PC-3 (cell line): ENCODE measurements at regions of chr12 and their contacts with region 1.

Region 1: GRCh38 chr12:130775953-130776856 is 60.1 kb upstream of the RIMBP2 start:
- DNase-seq: peak; percentile 88
- ATAC-seq: peak; percentile 93
- H3K4me3 ChIP-seq: peak overlapping the region; percentile 59
- H3K27ac ChIP-seq: no peak overlapping the region
- H3K4me1 ChIP-seq: peaks cover 16% of the 10 kb centered on the region
- H3K27me3 ChIP-seq: peaks cover 16% of the 10 kb centered on the region
- CTCF ChIP-seq: no peak

Region 2: GRCh38 chr12:130799051-130799450 is 22.8 kb after region 1 on chr12:
- CTCF ChIA-PET with region 1: no interaction called
- POLR2A ChIA-PET with region 1: no interaction called
- intact Hi-C with region 1: loop called (anchors 1 kb)
- DNase-seq: peak; percentile 86
- ATAC-seq: peak; percentile 95
- H3K4me3 ChIP-seq: no peak overlapping the region
- H3K27ac ChIP-seq: no peak overlapping the region
- H3K4me1 ChIP-seq: peaks cover 13% of the 10 kb centered on the region
- H3K27me3 ChIP-seq: no peaks in the 10 kb centered on the region
- CTCF ChIP-seq: no peak

Region 3: GRCh38 chr12:130818635-130819576 is 42.7 kb after region 1 on chr12:
- CTCF ChIA-PET with region 1: no interaction called
- POLR2A ChIA-PET with region 1: no interaction called
- intact Hi-C with region 1: loop called (anchors 5 kb)
- DNase-seq: peak; percentile 87
- ATAC-seq: peak; percentile 97
- H3K4me3 ChIP-seq: peak overlapping the region; percentile 64
- H3K27ac ChIP-seq: peak overlapping the region; percentile 60
- H3K4me1 ChIP-seq: peaks cover 11% of the 10 kb centered on the region; the same call in 1 of the 2 replicates
- H3K27me3 ChIP-seq: no peaks in the 10 kb centered on the region
- CTCF ChIP-seq: peak; percentile 93